ENCODE measurements at regions of chr14 and their contacts with region 1.

Region 1: GRCh38 chr14:83071888-83072501 is 1538.3 kb upstream of the SEL1L start:
- DNase-seq: peak; percentile 18
- ATAC-seq: no peak
- H3K4me3 ChIP-seq: no peak overlapping the region
- H3K27ac ChIP-seq: no peak overlapping the region
- H3K4me1 ChIP-seq: no peaks in the 10 kb centered on the region
- H3K27me3 ChIP-seq: no peaks in the 10 kb centered on the region
- CTCF ChIP-seq: peak; percentile 22; the same call in 1 of the 2 replicates
- EP300 ChIP-seq: no peak
- POLR2A ChIP-seq: no peak
- RAD21 ChIP-seq: no peak

Region 2: DNA sequence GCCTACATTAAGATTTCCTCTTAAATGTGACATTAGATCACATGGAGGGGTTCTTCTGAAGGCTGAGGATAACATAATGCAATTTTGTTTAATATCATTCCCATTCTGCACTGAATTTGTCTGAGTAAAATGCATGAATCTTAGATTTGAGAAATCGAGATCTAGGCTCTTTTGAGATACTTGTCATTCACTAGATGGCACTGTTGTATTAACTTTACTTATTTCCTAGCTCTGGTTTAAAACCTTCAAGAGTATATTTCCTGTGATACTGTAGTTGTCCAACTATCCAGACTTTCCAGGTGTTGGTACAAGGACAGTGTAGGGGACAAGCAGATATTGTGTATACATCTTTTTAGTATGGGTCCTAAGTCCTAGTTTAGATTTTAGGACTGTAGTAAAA is 1446.7 kb before region 1 on chr14:
- CTCF ChIA-PET with region 1: no interaction called
- POLR2A ChIA-PET with region 1: no interaction called
- in situ Hi-C with region 1: no loop called
- intact Hi-C with region 1: loop called (anchors 5 kb)
- DNase-seq: peak; percentile 28
- ATAC-seq: peak; percentile 70
- H3K4me3 ChIP-seq: no peak overlapping the region
- H3K27ac ChIP-seq: no peak overlapping the region
- H3K4me1 ChIP-seq: no peaks in the 10 kb centered on the region
- H3K27me3 ChIP-seq: no peaks in the 10 kb centered on the region
- CTCF ChIP-seq: peak; percentile 61
- EP300 ChIP-seq: no peak
- POLR2A ChIP-seq: no peak
- RAD21 ChIP-seq: no peak; the same call in 1 of the 2 replicates

Region 3: GRCh38 chr14:81710234-81710845 is 1361.7 kb before region 1 on chr14:
- CTCF ChIA-PET with region 1: interaction called, 4 read pairs
- POLR2A ChIA-PET with region 1: no interaction called
- in situ Hi-C with region 1: no loop called
- intact Hi-C with region 1: loop called (anchors 1 kb)
- DNase-seq: peak; percentile 42
- ATAC-seq: peak; percentile 58; the same call in 1 of the 3 replicates
- H3K4me3 ChIP-seq: no peak overlapping the region
- H3K27ac ChIP-seq: no peak overlapping the region
- H3K4me1 ChIP-seq: no peaks in the 10 kb centered on the region
- H3K27me3 ChIP-seq: no peaks in the 10 kb centered on the region
- CTCF ChIP-seq: peak; percentile 76
- EP300 ChIP-seq: no peak
- POLR2A ChIP-seq: no peak
- RAD21 ChIP-seq: no peak